ENCODE measurements at regions of chr9 and their contacts with region 1.

Region 1: DNA sequence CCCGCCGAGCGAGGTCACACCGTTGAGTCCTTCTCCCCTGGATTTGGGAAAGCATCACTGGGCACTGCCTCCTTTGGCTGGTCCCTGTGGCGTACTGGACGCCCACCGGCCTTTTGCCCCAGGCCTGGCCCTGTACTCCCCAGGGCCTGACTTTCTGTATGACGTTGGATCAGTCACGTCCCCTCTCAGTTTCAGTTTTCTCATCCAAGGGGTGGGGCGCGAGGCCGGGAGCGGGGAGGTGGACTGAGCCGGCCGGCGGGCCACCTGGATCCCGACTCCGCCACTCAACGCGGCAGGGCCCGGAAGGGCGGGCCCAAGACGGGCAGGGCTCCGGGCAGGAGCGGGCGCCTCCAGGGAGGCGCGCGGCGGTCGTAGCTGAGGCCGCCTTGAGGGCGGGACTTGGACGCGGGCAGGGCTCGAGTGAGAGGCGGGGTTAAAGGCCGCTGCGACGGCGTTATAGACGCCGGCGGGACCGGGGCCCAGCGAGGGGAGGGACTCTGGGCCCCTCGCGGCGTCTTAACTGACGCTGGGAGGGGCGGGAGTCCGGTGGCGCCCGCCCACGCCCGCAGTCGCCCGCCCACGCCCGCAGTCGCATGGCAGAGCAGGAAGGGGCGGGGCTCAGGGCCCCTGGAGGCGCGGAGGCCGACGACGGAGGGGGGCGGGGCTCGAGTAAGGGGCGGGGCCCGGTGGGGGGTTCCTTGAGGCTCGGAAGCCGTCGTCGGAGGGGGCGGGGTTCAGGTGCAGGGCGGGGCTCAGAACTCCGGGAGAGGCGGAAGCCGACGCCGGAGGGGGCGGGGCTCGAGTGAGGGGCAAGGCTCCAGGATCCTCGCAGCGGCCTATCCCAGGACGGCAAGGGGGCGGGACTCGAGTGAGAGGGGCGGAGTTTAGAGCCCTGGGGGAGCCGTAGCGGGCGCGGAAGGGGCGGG is 549 bp upstream of the CARD19 start:
- DNase-seq: peak; percentile 100
- ATAC-seq: peak; percentile 85 to 93 (median 90)
- H3K4me3 ChIP-seq: peak overlapping the region; percentile 51 to 100 (median 94)
- H3K27ac ChIP-seq: peak overlapping the region; percentile 80 to 98 (median 96)
- H3K4me1 ChIP-seq: peaks cover 15 to 67% (median 54%) of the 10 kb centered on the region in 12 donors
- H3K27me3 ChIP-seq: no peaks in the 10 kb centered on the region
- CTCF ChIP-seq: no peak
- POLR2A ChIP-seq: peak in 1 of 2 donors; percentile 86

Region 2: GRCh38 chr9:92850884-92851283 is 244.6 kb before region 1 on chr9:
- intact Hi-C with region 1: no loop called
- DNase-seq: no peak
- ATAC-seq: no peak
- H3K4me3 ChIP-seq: no peak overlapping the region
- H3K27ac ChIP-seq: no peak overlapping the region
- H3K4me1 ChIP-seq: no peaks in the 10 kb centered on the region
- H3K27me3 ChIP-seq: no peaks in the 10 kb centered on the region
- CTCF ChIP-seq: no peak
- POLR2A ChIP-seq: no peak

Region 3: DNA sequence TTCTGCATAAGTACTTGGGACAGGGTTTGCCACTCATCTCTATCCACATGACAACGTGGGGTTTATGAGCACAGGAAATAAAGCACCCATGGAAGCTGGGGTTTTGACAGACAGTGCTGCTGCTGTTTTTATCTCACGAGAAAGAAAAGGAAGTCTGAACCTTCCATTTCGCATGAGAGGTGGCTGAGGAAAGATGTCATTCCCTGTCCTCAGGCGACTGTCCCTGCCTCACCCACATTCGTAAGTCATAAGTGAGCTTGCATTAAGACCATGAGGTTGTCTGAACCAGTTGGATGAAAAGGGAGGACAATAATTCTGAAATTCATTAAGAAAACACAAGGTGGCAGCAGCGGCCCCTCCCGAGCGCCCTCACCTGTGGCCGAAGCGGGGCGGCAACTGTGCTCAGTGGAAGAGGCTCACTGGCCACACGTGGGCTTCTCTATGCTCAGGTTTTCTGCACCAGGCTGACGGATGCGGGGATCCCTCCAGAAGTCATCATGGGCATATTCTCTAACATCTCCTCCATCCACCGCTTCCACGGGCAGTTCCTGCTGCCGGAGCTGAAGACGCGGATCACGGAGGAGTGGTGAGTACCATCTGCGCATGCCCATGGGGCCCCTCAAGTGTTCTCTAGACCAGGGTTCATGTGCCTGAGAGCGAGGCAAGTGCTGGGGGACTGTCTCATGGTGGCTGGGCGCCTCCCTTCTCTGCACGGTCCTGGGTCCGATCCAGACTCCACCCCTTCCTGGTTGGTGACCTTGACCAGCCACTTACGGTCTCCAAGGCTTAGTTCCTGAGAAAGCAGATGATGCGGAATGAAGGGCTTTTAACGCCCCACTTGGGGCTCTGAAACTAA is 91.7 kb before region 1 on chr9:
- intact Hi-C with region 1: loop called in 3 of 10 experiments (anchors 10 kb)
- DNase-seq: peak in 3 of 5 donors; percentile 48 to 57 (median 50)
- ATAC-seq: peak in 3 of 4 donors; percentile 71 to 87 (median 79)
- H3K4me3 ChIP-seq: peak overlapping the region in 8 of 12 donors; percentile 5 to 37 (median 24)
- H3K27ac ChIP-seq: no peak overlapping the region
- H3K4me1 ChIP-seq: peaks cover 0 to 17% (median 0%) of the 10 kb centered on the region in 12 donors
- H3K27me3 ChIP-seq: no peaks in the 10 kb centered on the region
- CTCF ChIP-seq: peak; percentile 48 to 82 (median 64)
- POLR2A ChIP-seq: no peak

Region 4: GRCh38 chr9:93051680-93052089 is 43.8 kb before region 1 on chr9:
- intact Hi-C with region 1: loop called in 2 of 10 experiments (anchors 5 kb)
- DNase-seq: peak in 4 of 5 donors; percentile 56 to 70 (median 61)
- ATAC-seq: peak; percentile 56 to 83 (median 74)
- H3K4me3 ChIP-seq: no peak overlapping the region
- H3K27ac ChIP-seq: peak overlapping the region in 9 of 12 donors; percentile 5 to 65 (median 49)
- H3K4me1 ChIP-seq: peaks cover 0 to 18% (median 8%) of the 10 kb centered on the region in 12 donors
- H3K27me3 ChIP-seq: no peaks in the 10 kb centered on the region
- CTCF ChIP-seq: no peak
- POLR2A ChIP-seq: no peak

Region 5: DNA sequence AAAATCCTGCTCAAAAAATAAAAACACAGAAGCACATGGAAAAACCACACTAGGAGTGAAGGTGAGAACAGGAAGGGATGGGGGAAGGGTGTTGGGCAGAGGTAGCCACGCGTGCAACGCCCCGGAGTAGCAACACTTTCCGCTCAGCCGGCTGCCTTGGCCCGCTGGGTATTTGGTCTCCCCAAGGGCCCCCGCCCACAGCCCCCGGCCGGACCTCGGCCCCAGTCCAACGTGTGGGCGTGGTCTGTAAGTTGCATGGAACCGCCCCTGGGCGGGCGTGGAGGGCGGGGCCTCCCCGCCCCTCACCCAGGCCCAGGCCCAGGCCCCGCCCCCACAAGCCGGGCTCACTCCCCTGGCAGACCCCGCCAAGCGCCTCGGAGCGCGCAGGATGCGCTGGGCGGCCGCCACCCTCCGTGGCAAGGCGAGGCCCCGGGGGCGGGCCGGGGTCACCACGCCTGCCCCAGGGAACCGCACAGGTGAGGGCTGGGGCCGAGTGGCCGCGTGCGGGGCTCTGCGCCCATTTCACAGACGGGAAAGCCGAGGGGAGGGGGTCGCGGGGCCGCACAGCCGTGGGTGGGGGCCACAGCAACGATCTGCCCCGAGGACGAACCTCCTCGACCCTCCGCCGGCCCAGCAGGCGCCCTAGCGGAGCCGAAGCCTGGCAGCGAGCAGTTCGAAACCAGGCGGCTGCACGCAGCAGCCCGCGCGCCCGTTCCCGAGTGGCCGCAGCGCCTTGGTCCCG is 36.9 kb before region 1 on chr9 and contains the start of gene SUSD3:
- intact Hi-C with region 1: loop called in 2 of 10 experiments (anchors 5 kb)
- DNase-seq: peak; percentile 54 to 86 (median 62)
- ATAC-seq: peak in 3 of 4 donors; percentile 67 to 77 (median 77)
- H3K4me3 ChIP-seq: peak within 1 kb of the TSS in 11 of 12 donors; percentile 29 to 72 (median 53)
- H3K27ac ChIP-seq: peak within 1 kb of the TSS in 3 of 12 donors; percentile 9 to 74 (median 34)
- H3K4me1 ChIP-seq: peaks cover 0 to 69% (median 10%) of the 10 kb centered on the region in 12 donors
- H3K27me3 ChIP-seq: peaks cover 0 to 15% (median 0%) of the 10 kb centered on the region in 9 donors
- CTCF ChIP-seq: no peak
- POLR2A ChIP-seq: no peak
- total RNA-seq, gene SUSD3: 0.29 to 5.2 (median 0.56) TPM in 7 of 9 donors, not detected in the others

Region 6: GRCh38 chr9:93134015-93134739 is 38.7 kb after region 1 on chr9 and contains the start of gene NINJ1:
- intact Hi-C with region 1: loop called in 2 of 10 experiments (anchors 5 kb)
- DNase-seq: peak; percentile 72 to 87 (median 80)
- ATAC-seq: peak; percentile 46 to 86 (median 77)
- H3K4me3 ChIP-seq: peak within 1 kb of the TSS; percentile 69 to 98 (median 86)
- H3K27ac ChIP-seq: peak within 1 kb of the TSS; percentile 74 to 97 (median 95)
- H3K4me1 ChIP-seq: peaks cover 4 to 63% (median 48%) of the 10 kb centered on the region in 12 donors
- H3K27me3 ChIP-seq: no peaks in the 10 kb centered on the region
- CTCF ChIP-seq: no peak
- POLR2A ChIP-seq: peak; percentile 62 to 81
- total RNA-seq, gene NINJ1: 42.2 to 96.1 (median 56.3) TPM

Region 7: DNA sequence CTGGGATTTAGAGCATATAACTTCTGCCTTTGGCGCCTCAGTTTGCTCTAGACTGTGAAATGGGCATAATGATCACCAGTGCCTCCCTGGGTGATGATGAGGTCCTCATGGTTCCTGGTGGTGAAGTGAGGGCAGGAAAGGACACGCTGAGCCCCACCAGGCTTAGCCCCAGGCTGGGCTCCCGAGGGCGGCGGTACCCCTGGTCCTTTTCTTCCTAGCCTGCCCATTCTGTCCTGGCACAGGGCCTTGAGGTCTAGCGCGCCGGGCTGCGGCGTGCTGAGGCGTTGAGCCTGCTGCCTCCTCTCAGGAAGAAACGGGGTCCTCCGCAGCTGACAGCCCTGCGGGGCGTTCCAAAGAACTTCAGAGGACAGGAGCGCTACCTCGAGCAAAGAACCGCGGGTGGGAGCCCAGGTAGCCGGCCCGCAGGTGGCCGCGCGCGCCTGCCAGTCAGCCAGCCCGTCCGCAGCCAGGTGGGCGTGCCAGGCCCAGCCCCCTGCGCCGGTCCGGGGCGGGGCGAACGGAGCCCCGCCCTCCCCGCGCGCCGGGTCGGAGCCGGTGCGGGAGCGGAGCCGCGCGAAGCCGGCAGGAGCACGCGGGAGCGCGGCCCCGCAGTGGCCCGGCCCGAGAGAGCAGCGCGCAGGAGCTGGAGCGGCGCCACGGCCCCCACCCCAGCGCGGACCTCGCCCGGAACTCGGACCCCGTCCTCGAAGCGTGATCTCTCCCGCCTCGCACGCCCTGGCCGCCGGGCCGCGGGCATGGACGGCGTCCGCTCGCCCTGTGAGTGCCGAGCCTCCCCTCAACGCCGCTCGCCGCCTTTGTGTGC is 88.4 kb after region 1 on chr9 and contains the start of gene WNK2:
- intact Hi-C with region 1: no loop called
- DNase-seq: peak in 2 of 5 donors; percentile 52 to 56
- ATAC-seq: peak in 2 of 4 donors; percentile 59 to 73
- H3K4me3 ChIP-seq: peak within 1 kb of the TSS; percentile 53 to 82 (median 61)
- H3K27ac ChIP-seq: peak within 1 kb of the TSS; percentile 49 to 98 (median 85)
- H3K4me1 ChIP-seq: peaks cover 0 to 59% (median 16%) of the 10 kb centered on the region in 12 donors
- H3K27me3 ChIP-seq: peaks cover 0 to 42% (median 0%) of the 10 kb centered on the region in 9 donors
- CTCF ChIP-seq: no peak
- POLR2A ChIP-seq: peak; percentile 46
- total RNA-seq, gene WNK2: 107 to 206 (median 129) TPM

Measured in heart left ventricle (tissue), 16 donors.